Esophagus muscularis mucosa (tissue), 4 donors: ENCODE measurements at regions of chr5 and their contacts with region 1.

Region 1: GRCh38 chr5:138213161-138214029 is at the start of gene CDC23:
- DNase-seq: peak; percentile 98
- H3K4me3 ChIP-seq: peak within 1 kb of the TSS; percentile 80 to 98 (median 96)
- H3K27ac ChIP-seq: peak within 1 kb of the TSS; percentile 83 to 86 (median 84)
- H3K4me1 ChIP-seq: peaks cover 18 to 33% (median 28%) of the 10 kb centered on the region in 4 donors
- H3K27me3 ChIP-seq: no peaks in the 10 kb centered on the region
- CTCF ChIP-seq: peak in 1 of 3 experiments; percentile 18
- EP300 ChIP-seq: no peak
- POLR2A ChIP-seq: no peak
- total RNA-seq, gene CDC23: 15.6 to 21.2 (median 20.4) TPM

Region 2: GRCh38 chr5:137975208-137975607 is 238.2 kb before region 1 on chr5:
- intact Hi-C with region 1: no loop called
- DNase-seq: no peak
- H3K4me3 ChIP-seq: no peak overlapping the region
- H3K27ac ChIP-seq: no peak overlapping the region
- H3K4me1 ChIP-seq: no peaks in the 10 kb centered on the region
- H3K27me3 ChIP-seq: no peaks in the 10 kb centered on the region
- CTCF ChIP-seq: no peak
- EP300 ChIP-seq: no peak
- POLR2A ChIP-seq: no peak

Region 3: DNA sequence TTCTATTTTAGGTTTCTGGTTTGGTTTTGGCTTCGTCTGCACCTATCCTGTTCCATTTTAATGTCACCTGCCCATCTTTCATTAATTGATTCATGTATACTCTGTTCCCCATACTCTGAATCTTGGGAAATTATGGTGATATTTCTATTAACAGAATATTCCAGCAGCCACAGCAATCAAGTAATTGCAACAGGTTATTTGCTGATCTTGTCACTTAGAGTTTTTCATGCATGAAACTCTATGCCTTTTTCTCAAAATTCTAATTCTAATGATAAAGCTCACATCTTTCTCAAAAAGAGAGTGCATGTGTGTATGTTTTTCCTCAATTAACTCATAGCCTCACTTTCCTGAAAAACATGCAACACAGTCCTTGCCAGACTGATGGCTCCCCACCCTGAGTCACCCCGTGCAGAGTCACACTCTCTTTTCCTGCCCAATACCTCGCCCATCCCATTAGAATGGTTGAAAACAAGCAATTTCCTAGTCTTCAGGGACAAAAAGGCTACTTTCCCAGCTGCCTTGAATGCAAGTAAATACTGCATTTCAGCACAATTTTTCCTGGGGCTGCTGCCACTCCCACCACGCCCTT is 45.4 kb after region 1 on chr5:
- intact Hi-C with region 1: no loop called
- DNase-seq: no peak
- H3K4me3 ChIP-seq: no peak overlapping the region
- H3K27ac ChIP-seq: no peak overlapping the region
- H3K4me1 ChIP-seq: no peaks in the 10 kb centered on the region
- H3K27me3 ChIP-seq: no peaks in the 10 kb centered on the region
- CTCF ChIP-seq: no peak
- EP300 ChIP-seq: no peak
- POLR2A ChIP-seq: no peak

Region 4: DNA sequence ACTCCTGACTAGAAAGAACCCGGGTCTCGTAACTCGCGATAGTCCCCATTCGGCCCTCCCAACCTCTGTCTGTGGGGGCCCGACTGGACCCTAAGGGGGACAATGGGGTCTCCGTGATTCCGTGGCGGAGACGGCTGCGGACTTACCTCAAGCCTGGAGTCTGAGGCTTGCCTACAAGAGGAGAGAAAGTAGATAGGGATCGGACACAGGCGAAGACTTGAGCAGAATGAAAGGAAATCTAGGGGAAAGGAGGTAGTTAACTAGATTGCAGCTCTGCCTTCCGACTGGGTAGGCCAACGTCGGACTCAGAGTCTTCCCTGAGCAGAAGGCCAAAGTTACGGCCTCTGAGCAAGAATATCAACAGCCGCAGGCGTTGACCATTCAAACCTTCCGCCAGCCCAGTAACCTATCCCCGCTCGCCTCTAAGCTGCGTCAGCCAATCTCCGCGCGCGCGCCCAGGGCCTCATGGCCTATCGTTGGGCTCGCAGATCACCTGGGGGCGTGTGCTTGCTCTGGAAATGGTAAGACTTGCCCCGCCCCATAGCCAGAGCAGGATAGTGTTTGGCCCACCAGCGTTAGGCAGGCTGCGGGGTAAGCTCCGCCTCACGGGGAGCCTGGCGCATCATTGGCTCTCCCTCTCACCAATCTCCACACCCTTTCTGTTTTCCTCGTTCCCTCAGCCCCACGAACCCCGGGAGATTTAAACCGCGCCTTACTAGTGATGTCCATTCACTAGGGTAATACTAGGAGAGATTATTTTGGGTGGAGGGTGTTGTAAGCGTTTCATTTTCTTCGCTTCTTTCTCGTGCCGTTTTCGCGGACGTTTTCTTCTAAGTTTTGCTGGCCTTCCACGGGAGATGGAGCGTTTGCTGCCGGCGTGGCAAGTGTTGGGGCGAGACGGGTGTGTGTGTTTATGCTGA is 118.3 kb after region 1 on chr5 and contains the start of gene CDC25C:
- intact Hi-C with region 1: loop called (anchors 10 kb)
- DNase-seq: peak; percentile 100
- H3K4me3 ChIP-seq: peak within 1 kb of the TSS; percentile 42 to 62 (median 53)
- H3K27ac ChIP-seq: peak within 1 kb of the TSS in 2 of 4 donors; percentile 22 to 31
- H3K4me1 ChIP-seq: peaks cover 12 to 17% (median 14%) of the 10 kb centered on the region in 4 donors
- H3K27me3 ChIP-seq: no peaks in the 10 kb centered on the region
- CTCF ChIP-seq: no peak
- EP300 ChIP-seq: no peak
- POLR2A ChIP-seq: no peak
- total RNA-seq, gene CDC25C: 0.17 TPM in 1 of 4 donors, not detected in the others